ENCODE measurements at regions of chr15 and their contacts with region 1.

Region 1: GRCh38 chr15:97061392-97061791 is 730.9 kb downstream of the NR2F2 start:
- DNase-seq: no peak

Region 2: GRCh38 chr15:97009031-97009431 is 52.4 kb before region 1 on chr15:
- intact Hi-C with region 1: loop called in 1 of 2 experiments (anchors 10 kb)
- DNase-seq: no peak

Region 3: DNA sequence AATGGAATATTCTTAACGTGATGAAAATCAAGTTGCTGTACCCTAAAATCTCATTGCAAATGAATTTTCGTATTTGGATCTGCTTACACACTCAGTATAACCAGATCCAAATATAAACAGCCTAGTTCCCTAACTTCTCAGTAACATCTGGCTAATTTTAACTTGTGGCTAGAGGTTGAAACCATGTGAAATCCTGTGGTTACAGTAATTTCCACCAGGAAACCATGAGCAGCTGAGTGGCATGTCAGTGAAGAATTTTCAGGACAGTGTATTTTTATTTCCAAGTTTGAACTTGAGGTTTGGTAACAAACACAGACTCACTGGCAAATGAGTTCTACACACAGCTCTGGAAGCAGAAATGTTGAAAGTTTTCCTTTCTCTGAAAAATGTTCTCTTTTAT is 23.3 kb after region 1 on chr15:
- intact Hi-C with region 1: no loop called
- DNase-seq: no peak